Body of pancreas (tissue), 4 donors: ENCODE measurements at regions of chr19 and their contacts with region 1.

Region 1: GRCh38 chr19:33368074-33368864 is 5.2 kb upstream of the CEBPG start:
- DNase-seq: no peak
- ATAC-seq: no peak
- H3K4me3 ChIP-seq: no peak overlapping the region
- H3K27ac ChIP-seq: no peak overlapping the region
- H3K4me1 ChIP-seq: peaks cover 5% of the 10 kb centered on the region
- H3K27me3 ChIP-seq: no peaks in the 10 kb centered on the region
- CTCF ChIP-seq: no peak
- POLR2A ChIP-seq: no peak

Region 2: GRCh38 chr19:33292595-33293441 is 75.5 kb before region 1 on chr19:
- intact Hi-C with region 1: loop called (anchors 10 kb)
- DNase-seq: peak in 1 of 4 donors; percentile 26
- ATAC-seq: peak; percentile 86
- H3K4me3 ChIP-seq: no peak overlapping the region
- H3K27ac ChIP-seq: peak overlapping the region in 3 of 4 donors; percentile 1 to 66 (median 15)
- H3K4me1 ChIP-seq: peaks cover 35% of the 10 kb centered on the region
- H3K27me3 ChIP-seq: no peaks in the 10 kb centered on the region
- CTCF ChIP-seq: no peak
- POLR2A ChIP-seq: peak in 1 of 3 donors; percentile 7